WTC11 (cell line): ENCODE measurements at regions of chr17 and their contacts with region 1.

Region 1: GRCh38 chr17:42405963-42406495 is 17.0 kb downstream of the CAVIN1 start:
- DNase-seq: peak; percentile 92
- ATAC-seq: peak; percentile 66
- H3K4me3 Mint-ChIP-seq: no peak overlapping the region
- H3K27ac Mint-ChIP-seq: no peak overlapping the region
- H3K4me1 Mint-ChIP-seq: peaks cover 43% of the 10 kb centered on the region
- H3K27me3 Mint-ChIP-seq: no peaks in the 10 kb centered on the region; the same call in 1 of the 2 replicates
- CTCF ChIP-seq: peak; percentile 35; the same call in 1 of the 2 replicates

Region 2: DNA sequence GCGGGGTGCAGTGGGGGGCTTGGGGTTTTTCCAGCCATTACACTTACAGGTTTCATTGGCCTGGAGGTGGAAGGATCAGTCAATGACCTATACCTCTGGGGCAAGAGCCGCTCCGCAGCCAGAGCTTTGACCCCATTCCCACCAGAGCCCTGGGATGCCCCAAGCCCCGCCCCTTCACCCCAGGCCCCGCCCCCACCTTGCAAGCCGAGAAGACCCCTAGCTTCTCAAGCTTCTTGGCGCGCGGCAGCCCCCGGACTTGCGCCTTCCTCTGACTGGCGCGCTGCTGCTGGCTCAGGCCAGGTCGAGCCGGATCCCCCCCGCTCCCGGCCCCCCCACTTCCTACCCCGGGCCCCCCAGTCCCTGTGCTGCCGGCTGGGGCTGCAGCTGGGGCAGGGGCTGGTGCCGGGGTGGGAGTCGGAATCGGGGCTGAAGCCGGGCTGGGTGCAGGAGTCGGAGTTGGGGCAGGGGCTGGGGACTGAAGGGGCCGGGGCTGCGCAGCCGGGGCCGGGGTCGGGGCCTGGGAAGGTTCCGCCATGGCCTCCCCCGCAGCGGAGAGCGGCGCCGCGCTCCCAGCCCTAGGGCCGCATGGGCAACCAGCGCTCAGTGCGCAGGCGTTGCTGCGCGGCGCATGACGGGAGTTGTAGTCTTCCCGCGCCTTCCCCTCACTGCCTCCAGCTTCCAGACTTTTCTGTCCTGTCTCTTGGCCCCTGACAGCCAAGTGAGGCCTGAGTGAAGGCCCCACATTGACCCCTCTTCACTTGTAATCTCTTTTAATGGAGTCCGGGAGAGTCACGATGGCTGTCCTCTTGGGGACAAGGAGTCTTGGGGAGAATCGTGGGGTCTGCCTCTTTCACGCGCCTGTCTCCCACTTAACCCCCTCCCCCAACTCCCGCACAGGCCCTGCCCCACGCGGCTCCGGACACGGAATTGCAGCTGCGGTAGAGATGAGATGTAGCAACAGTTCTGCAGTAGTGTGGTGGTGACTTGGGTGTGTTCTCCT is 285.0 kb before region 1 on chr17 and contains the start of gene KAT2A:
- CTCF ChIA-PET with region 1: interaction called, 10 read pairs
- POLR2A ChIA-PET with region 1: interaction called, 3 read pairs
- DNase-seq: peak; percentile 85
- ATAC-seq: peak; percentile 73
- H3K4me3 Mint-ChIP-seq: peak within 1 kb of the TSS; percentile 69
- H3K27ac Mint-ChIP-seq: 0 out of 2 replicates have a peak within 1 kb of the TSS, but pooled peaks have one; percentile 19
- H3K4me1 Mint-ChIP-seq: peaks cover 31% of the 10 kb centered on the region
- H3K27me3 Mint-ChIP-seq: no peaks in the 10 kb centered on the region
- CTCF ChIP-seq: no peak
- total RNA-seq, gene KAT2A: 44.8 to 54.0 TPM (median 52.7 TPM) in 3 replicates

Region 3: GRCh38 chr17:42312285-42313130 is 93.5 kb before region 1 on chr17:
- CTCF ChIA-PET with region 1: interaction called, 196 read pairs
- POLR2A ChIA-PET with region 1: interaction called, 5 read pairs
- DNase-seq: peak; percentile 93
- ATAC-seq: peak; percentile 86
- H3K4me3 Mint-ChIP-seq: peak overlapping the region; percentile 38; the same call in 1 of the 2 replicates
- H3K27ac Mint-ChIP-seq: no peak overlapping the region
- H3K4me1 Mint-ChIP-seq: peaks cover 33% of the 10 kb centered on the region
- H3K27me3 Mint-ChIP-seq: no peaks in the 10 kb centered on the region
- CTCF ChIP-seq: no peak

Region 4: DNA sequence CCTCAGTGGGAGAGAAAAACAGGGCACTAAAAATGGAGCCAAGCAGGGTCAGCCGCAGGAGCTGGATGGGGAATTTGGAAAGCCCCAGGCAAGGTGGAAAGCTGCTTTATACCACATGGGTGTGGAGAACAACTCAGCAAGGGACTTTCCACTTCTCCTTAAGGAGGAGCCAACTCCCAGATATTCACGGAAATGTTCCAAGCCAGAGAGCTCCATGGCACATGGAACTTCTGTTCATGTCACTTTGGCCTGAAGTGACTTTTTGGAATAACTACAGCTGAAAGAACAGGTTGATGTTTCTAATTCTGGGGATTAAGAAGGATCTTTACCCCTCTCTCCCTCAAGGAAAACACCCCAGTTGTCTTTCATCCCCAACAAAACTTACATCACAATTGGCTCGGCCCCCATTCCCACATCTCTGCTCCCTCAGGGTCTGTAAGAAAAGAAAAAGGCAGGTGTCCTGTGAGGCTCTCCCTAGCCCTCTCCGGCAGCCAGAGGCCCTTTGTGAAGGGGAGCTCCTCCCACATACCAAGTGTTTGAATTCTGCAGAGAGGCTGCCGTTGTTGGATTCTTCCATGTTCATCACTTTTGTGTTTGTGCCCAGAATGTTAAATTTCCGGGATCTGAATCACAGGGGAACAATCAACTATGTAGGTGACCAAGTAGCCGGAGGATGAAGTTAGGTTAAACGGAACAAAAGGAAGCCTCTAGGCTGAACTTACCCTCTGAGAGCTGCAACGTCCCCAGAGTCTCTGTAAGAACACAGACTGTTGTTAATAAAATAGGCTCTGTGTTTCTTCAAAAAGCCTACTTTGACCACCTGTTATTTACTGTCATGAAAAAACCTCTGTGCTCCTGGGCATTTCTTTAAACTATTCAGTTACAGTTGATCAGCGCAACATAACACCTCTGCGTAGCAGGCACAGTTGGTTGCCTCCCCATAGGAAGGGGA is 76.7 kb before region 1 on chr17:
- CTCF ChIA-PET with region 1: interaction called, 123 read pairs
- POLR2A ChIA-PET with region 1: interaction called, 5 read pairs
- DNase-seq: peak; percentile 76
- ATAC-seq: peak; percentile 99
- H3K4me3 Mint-ChIP-seq: peak overlapping the region; percentile 38
- H3K27ac Mint-ChIP-seq: peak overlapping the region; percentile 97
- H3K4me1 Mint-ChIP-seq: peaks cover 30% of the 10 kb centered on the region
- H3K27me3 Mint-ChIP-seq: no peaks in the 10 kb centered on the region; the same call in 1 of the 2 replicates
- CTCF ChIP-seq: no peak

Region 5: DNA sequence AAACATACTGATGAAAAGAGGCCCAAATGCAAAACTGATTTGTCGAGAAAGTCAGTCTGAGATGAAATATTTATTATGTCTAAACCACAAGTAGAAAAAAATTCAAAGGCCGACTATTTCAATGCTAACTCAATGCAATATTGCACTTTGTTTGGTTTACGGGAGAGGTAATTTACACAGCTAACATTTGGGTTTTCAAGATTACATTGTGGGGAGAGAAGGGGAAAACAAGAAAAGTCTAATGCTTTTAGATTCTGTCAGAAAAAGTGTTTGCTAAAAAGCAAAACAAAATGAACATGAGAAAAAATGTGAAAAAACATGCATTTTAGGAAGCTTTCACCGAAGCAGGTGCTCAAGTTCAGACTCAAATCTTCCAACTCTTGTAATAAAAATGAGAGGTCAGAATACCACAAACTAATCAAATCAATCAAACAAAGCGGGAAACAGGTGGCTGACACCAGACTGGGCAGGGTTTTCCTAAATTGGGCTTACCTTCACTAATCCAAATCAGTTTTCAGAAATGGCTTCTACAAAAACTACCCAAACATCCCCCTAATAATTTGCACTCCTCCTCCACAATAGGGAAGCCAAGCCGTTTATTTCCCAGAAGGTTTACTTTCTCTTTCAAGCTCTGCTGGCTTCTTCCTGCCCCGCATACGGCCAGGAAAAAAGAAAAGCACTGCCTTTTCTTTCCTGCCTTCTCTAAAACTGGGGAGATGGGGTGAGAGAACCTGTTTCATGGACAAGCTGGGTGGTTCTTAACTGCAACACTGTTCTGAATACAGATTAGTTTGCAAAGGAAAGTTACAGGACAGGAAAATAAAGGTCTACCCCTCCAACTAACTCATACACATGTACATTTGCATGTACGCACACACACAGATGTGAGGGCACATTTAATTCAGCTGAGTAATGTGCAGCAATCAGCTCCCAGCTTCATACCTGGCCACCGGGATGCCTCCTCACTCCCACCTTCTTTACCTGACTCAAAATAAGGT is 27.1 kb before region 1 on chr17:
- CTCF ChIA-PET with region 1: interaction called, 10 read pairs
- POLR2A ChIA-PET with region 1: no interaction called
- DNase-seq: no peak
- ATAC-seq: peak; percentile 60
- H3K4me3 Mint-ChIP-seq: peak overlapping the region; percentile 29
- H3K27ac Mint-ChIP-seq: peak overlapping the region; percentile 95
- H3K4me1 Mint-ChIP-seq: peaks cover 60% of the 10 kb centered on the region
- H3K27me3 Mint-ChIP-seq: no peaks in the 10 kb centered on the region
- CTCF ChIP-seq: no peak

Region 6: DNA sequence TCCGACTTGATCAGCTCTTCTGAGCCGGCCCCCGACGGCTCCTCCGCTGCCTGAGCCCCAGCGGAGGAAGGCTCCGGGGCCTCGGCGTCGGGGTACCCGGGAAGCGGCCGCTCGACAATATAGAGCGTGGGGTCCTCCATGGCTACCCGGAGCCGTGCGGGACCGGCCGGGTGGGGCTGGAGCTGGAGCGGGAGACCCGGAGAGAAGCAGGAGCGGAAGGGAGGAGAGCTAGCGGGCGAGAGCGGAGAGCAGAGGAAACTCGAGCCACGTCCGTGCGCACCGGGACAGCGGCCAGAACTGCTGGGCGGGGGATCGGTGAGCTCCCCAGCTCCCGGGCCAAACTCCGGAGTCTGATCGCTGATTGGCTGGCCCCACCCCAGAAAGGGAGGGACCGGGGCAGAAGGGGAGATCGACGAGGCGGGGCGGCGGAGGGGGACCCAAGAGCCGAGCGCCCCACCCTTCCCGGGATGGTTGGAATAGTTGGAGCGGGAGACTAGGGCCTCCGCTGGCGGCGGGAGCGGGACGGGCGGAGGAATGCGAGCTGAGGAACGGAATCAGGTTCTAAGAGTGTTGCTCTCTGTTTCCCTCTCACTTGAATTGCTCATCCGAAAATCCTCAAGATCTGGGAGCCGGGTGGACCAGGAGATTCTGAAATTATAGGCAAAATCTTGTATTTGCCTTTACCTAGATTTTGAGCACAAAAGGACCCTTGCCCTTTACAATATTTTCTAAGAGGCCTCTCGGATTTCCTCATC is 17.1 kb after region 1 on chr17 and contains the start of gene CAVIN1:
- CTCF ChIA-PET with region 1: interaction called, 40 read pairs
- POLR2A ChIA-PET with region 1: interaction called, 4 read pairs
- DNase-seq: peak; percentile 97
- ATAC-seq: peak; percentile 86
- H3K4me3 Mint-ChIP-seq: peak within 1 kb of the TSS; percentile 95
- H3K27ac Mint-ChIP-seq: peak within 1 kb of the TSS; percentile 93
- H3K4me1 Mint-ChIP-seq: peaks cover 31% of the 10 kb centered on the region
- H3K27me3 Mint-ChIP-seq: peaks cover 57% of the 10 kb centered on the region
- CTCF ChIP-seq: no peak
- total RNA-seq, gene CAVIN1: 24.6 to 28.4 TPM (median 27.8 TPM) in 3 replicates

Region 7: GRCh38 chr17:42502091-42502490 is 96.1 kb after region 1 on chr17:
- CTCF ChIA-PET with region 1: no interaction called
- POLR2A ChIA-PET with region 1: no interaction called
- DNase-seq: no peak
- ATAC-seq: no peak
- H3K4me3 Mint-ChIP-seq: no peak overlapping the region
- H3K27ac Mint-ChIP-seq: no peak overlapping the region
- H3K4me1 Mint-ChIP-seq: no peaks in the 10 kb centered on the region
- H3K27me3 Mint-ChIP-seq: no peaks in the 10 kb centered on the region
- CTCF ChIP-seq: no peak

Region 8: DNA sequence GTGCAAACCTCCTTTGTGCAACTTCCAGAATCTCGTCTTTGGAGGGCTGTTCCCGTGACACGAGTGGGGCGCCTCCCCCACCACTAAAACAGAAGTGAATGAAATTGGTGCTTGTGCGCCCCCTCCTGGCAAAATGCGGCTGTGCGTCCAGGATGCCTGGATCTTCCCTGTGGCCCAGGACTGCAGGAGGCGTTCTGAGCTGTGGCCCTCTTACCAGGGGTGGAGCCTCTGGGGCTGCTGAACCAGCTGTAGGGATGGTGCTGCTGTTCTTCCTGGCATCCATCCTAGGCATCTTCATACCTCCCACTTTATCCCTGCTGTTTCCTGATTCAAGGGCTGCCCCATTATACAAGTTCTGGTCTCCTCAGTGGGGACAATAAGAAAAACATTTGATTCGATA is 111.5 kb after region 1 on chr17:
- CTCF ChIA-PET with region 1: interaction called, 27 read pairs
- POLR2A ChIA-PET with region 1: no interaction called
- DNase-seq: peak; percentile 91
- ATAC-seq: peak; percentile 83
- H3K4me3 Mint-ChIP-seq: no peak overlapping the region
- H3K27ac Mint-ChIP-seq: no peak overlapping the region
- H3K4me1 Mint-ChIP-seq: peaks cover 19% of the 10 kb centered on the region
- H3K27me3 Mint-ChIP-seq: peaks cover 4% of the 10 kb centered on the region
- CTCF ChIP-seq: peak; percentile 88